ENCODE measurements at regions of chr14 and their contacts with region 1.

Region 1: DNA sequence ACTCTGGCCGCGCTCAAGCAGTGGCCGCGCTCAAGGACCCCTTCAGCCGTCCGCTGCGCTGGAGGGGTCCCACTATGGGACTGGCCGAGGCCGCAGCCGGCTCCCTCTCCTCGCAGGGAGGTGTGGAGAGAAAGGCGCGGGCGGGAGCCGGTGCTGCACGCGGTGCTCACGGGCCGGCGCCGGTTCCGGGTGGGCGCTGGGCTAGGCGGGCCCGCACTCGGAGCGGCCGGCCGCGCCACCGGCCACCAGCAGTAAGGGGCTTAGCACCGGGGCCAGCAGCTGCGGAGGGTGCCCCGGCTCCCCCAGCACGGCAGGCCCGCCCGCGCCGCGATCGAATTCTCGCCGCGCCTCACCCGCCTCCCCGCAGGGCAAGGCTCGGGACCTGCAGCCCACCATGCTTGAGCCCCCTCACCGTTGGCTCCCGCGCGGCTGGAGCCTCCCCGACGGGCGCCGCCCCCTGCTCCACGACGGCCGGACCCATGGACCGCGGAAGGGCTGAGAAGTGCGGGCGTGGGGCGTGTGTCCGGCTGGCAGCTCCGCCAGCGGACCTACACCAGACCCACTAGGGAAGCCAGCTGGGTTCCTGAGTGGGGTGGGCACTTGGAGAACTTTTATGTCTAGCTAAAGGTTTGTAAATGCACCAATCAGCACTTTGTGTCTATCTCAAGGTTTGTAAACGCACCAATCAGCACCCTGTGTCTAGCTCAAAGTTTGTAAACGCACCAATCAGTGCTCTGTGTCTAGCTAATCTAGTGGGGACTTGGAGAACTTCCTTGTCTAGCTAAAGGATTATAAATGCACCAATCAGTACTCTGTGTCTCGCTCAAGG is 49.5 kb downstream of the KLHL28 start:
- DNase-seq: no peak
- H3K4me3 ChIP-seq: peak overlapping the region; percentile 67 to 73 (median 69)
- H3K27ac ChIP-seq: peak overlapping the region; percentile 18 to 57 (median 42)
- H3K4me1 ChIP-seq: peaks cover 5 to 21% (median 18%) of the 10 kb centered on the region in 4 donors
- H3K27me3 ChIP-seq: peaks cover 0 to 9% (median 3%) of the 10 kb centered on the region in 4 donors
- CTCF ChIP-seq: no peak
- EP300 ChIP-seq: no peak
- POLR2A ChIP-seq: no peak

Region 2: DNA sequence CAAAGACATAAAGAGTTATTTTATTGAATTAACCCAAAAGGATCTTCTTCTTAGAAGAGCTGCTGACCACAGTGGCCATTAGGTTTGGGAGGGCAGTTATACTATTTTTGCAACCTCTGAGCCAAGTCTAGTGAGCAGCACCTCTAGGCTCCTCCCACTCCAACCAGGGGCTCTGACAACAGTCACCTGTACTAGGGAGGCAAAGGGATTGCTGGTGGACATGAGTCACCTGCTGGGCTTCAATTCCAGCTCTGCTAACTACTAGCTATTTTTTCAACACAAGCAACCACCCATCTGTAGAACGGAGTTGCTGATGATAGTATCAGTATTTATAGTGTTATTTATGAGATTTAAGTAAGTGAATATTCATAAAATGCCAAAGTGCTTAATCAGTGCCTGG is 116.5 kb before region 1 on chr14:
- intact Hi-C with region 1: no loop called
- DNase-seq: no peak
- H3K4me3 ChIP-seq: no peak overlapping the region
- H3K27ac ChIP-seq: no peak overlapping the region
- H3K4me1 ChIP-seq: no peaks in the 10 kb centered on the region
- H3K27me3 ChIP-seq: no peaks in the 10 kb centered on the region
- CTCF ChIP-seq: no peak
- EP300 ChIP-seq: no peak
- POLR2A ChIP-seq: no peak

Region 3: GRCh38 chr14:45083971-45084722 is 171.9 kb after region 1 on chr14 and contains the start of gene PRPF39:
- intact Hi-C with region 1: loop called (anchors 10 kb)
- DNase-seq: peak; percentile 97
- H3K4me3 ChIP-seq: peak within 1 kb of the TSS; percentile 59 to 74 (median 68)
- H3K27ac ChIP-seq: peak within 1 kb of the TSS; percentile 81 to 85 (median 83)
- H3K4me1 ChIP-seq: peaks cover 17 to 52% (median 47%) of the 10 kb centered on the region in 4 donors
- H3K27me3 ChIP-seq: no peaks in the 10 kb centered on the region
- CTCF ChIP-seq: no peak
- EP300 ChIP-seq: no peak
- POLR2A ChIP-seq: peak; percentile 80
- total RNA-seq, gene PRPF39: 11.7 to 33.6 (median 16.8) TPM

Region 4: DNA sequence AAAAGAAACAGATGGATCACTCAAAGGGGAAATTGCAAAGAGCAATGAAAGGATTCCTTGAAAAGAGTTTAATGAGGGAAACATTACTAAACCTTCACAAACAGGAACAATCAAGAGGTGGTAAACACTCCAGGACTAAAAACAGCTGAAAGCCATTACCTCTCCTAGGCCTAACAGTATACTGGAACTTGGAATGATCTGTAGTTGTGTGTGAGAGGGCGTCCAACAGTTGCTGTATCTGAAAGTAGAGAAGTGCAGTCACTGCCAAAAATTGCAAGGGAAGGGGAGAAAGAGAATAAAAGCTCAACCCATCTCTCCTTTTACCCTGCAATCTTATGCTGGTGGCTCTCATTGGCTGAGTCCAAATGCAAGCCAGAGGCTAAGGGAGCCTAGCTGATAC is 357.8 kb after region 1 on chr14:
- intact Hi-C with region 1: loop called (anchors 5 kb)
- DNase-seq: no peak
- H3K4me3 ChIP-seq: no peak overlapping the region
- H3K27ac ChIP-seq: no peak overlapping the region
- H3K4me1 ChIP-seq: peaks cover 0 to 6% (median 0%) of the 10 kb centered on the region in 4 donors
- H3K27me3 ChIP-seq: no peaks in the 10 kb centered on the region
- CTCF ChIP-seq: no peak
- EP300 ChIP-seq: no peak
- POLR2A ChIP-seq: no peak